ENCODE measurements at regions of chr7 and their contacts with region 1.

Region 1: GRCh38 chr7:101153969-101154692 is at the start of gene AP1S1:
- DNase-seq: peak; percentile 99 to 100 (median 100)
- ATAC-seq: peak; percentile 97
- H3K4me3 ChIP-seq: peak within 1 kb of the TSS; percentile 79
- H3K27ac ChIP-seq: peak within 1 kb of the TSS; percentile 49; the same call in 1 of the 3 replicates
- H3K4me1 ChIP-seq: peaks cover 20 to 32% of the 10 kb centered on the region in 2 experiments
- H3K27me3 ChIP-seq: no peaks in the 10 kb centered on the region
- CTCF ChIP-seq: no peak
- EP300 ChIP-seq: no peak; the same call in 1 of the 2 replicates
- POLR2A ChIP-seq: no peak; the same call in 1 of the 2 replicates
- RAD21 ChIP-seq: no peak
- polyA plus RNA-seq, gene AP1S1: 4.4 to 13.6 TPM

Region 2: GRCh38 chr7:101031082-101031481 is 123.0 kb before region 1 on chr7:
- CTCF ChIA-PET with region 1: no interaction called
- POLR2A ChIA-PET with region 1: no interaction called
- in situ Hi-C with region 1: no loop called
- intact Hi-C with region 1: no loop called
- DNase-seq: peak in 1 of 4 experiments; percentile 6
- ATAC-seq: peak; percentile 34; the same call in 1 of the 3 replicates
- H3K4me3 ChIP-seq: no peak overlapping the region
- H3K27ac ChIP-seq: no peak overlapping the region
- H3K4me1 ChIP-seq: no peaks in the 10 kb centered on the region; a peak in 1 of 5 replicates
- H3K27me3 ChIP-seq: peaks cover 4 to 25% of the 10 kb centered on the region in 2 experiments; a peak in 3 of 5 replicates
- CTCF ChIP-seq: peak in 2 of 3 experiments; percentile 32 to 42; a peak in 3 of 6 replicates
- EP300 ChIP-seq: no peak
- POLR2A ChIP-seq: no peak
- RAD21 ChIP-seq: peak in 1 of 2 experiments; percentile 43; a peak in 2 of 4 replicates

Region 3: DNA sequence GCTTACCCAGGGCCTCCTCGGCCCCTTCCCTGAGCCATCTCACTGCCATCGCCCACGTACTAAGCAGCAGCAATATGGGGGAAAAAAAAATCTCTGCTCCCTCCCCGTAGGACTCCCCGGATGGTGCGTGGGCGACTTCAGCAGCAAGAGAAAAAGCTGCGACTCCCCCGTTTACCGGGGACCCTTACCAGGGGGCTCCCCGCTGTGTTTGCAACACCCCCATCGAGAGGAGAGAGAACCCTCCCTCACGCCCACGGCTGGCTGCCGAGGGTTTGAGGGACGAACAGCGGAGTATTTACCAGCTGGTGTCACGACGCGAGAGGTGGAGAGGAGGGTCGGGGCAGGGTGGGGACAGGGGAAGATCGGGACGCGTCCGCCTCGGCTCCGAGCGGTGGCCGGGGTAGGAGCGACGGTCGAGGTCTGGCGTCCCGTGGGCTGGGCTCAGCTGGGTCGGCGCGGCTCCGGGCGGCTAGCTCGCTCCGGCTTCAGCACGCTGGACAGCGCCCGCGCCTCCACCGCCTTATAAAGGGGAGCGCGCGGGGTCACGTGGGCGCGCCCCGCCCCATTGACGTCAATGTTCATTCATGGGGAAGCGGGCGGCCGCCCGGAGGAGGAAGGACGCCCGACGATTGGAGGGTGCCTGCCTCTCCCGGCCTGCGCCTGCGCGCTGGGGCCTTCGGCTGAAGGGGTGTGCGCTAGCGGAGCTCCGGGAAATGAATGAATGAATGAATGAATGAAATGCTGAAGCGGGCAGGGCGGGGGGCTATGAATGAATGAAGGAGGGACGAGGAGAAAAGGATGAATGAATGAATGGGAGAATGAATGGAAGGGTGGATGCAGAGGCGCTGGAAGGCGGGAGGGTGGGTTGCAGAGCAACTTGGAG is 11.2 kb after region 1 on chr7 and contains the start of gene VGF:
- CTCF ChIA-PET with region 1: no interaction called
- POLR2A ChIA-PET with region 1: interaction called, 3 read pairs
- in situ Hi-C with region 1: no loop called
- intact Hi-C with region 1: loop called (anchors 1 kb)
- DNase-seq: peak; percentile 97 to 99 (median 98)
- ATAC-seq: peak; percentile 88
- H3K4me3 ChIP-seq: peak within 1 kb of the TSS; percentile 35
- H3K27ac ChIP-seq: no peak within 1 kb of the TSS
- H3K4me1 ChIP-seq: peaks cover 36 to 67% of the 10 kb centered on the region in 2 experiments
- H3K27me3 ChIP-seq: peaks cover 5 to 20% of the 10 kb centered on the region in 2 experiments; a peak in 2 of 5 replicates
- CTCF ChIP-seq: no peak
- EP300 ChIP-seq: no peak
- POLR2A ChIP-seq: no peak; the same call in 1 of the 2 replicates
- RAD21 ChIP-seq: no peak
- polyA plus RNA-seq, gene VGF: 0.03 to 0.08 TPM

Region 4: DNA sequence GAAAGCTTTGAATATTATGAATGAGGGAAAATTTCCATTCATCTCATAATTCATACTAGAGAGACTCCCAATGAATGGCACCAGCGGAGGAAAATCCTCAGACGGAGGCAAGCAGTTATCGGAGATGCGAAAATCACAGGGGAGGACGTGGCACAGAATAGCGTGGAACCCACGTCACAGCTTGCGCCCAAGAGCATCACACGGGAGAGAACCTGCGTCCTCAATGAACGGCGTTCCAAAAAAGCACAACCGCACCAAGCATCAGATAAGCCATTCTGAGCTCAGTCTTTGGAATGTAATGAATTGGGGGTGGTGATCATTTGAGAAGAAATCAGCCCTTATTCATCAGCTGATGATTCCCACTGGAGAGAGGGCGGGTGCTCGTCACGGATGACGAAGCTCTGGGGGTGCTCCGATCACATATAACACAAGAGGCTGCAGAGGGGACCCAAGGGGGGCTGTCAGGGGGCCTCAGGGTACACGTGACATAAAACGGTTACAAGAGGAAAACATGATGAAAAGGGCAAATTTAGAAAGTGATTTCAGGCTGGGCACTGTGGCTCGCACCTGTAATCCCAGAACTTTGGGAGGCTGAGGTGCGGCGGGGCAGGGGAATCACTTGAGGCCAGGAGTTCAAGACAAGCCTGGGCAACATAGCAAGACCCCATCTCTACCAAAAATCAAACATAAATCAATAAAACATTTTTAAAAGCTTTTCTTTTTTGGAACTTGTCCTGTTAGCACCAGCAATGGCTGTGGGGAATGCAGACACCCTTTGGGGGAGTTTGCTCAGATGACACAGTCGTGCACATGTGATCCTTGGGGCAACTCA is 124.5 kb after region 1 on chr7:
- CTCF ChIA-PET with region 1: interaction called, 3 read pairs
- POLR2A ChIA-PET with region 1: interaction called, 3 read pairs
- in situ Hi-C with region 1: loop called (anchors 5 kb)
- intact Hi-C with region 1: no loop called
- DNase-seq: no peak
- ATAC-seq: no peak
- H3K4me3 ChIP-seq: no peak overlapping the region
- H3K27ac ChIP-seq: no peak overlapping the region
- H3K4me1 ChIP-seq: peaks cover 0 to 3% of the 10 kb centered on the region in 2 experiments; a peak in 1 of 5 replicates
- H3K27me3 ChIP-seq: peaks cover 29 to 57% of the 10 kb centered on the region in 2 experiments
- CTCF ChIP-seq: no peak
- EP300 ChIP-seq: no peak
- POLR2A ChIP-seq: no peak
- RAD21 ChIP-seq: no peak